ENCODE measurements at regions of chr1 and their contacts with region 1.

Region 1: GRCh38 chr1:23196639-23197328 is 20.5 kb downstream of the HTR1D start:
- DNase-seq: peak; percentile 96
- H3K4me3 ChIP-seq: no peak overlapping the region
- CTCF ChIP-seq: no peak

Region 2: DNA sequence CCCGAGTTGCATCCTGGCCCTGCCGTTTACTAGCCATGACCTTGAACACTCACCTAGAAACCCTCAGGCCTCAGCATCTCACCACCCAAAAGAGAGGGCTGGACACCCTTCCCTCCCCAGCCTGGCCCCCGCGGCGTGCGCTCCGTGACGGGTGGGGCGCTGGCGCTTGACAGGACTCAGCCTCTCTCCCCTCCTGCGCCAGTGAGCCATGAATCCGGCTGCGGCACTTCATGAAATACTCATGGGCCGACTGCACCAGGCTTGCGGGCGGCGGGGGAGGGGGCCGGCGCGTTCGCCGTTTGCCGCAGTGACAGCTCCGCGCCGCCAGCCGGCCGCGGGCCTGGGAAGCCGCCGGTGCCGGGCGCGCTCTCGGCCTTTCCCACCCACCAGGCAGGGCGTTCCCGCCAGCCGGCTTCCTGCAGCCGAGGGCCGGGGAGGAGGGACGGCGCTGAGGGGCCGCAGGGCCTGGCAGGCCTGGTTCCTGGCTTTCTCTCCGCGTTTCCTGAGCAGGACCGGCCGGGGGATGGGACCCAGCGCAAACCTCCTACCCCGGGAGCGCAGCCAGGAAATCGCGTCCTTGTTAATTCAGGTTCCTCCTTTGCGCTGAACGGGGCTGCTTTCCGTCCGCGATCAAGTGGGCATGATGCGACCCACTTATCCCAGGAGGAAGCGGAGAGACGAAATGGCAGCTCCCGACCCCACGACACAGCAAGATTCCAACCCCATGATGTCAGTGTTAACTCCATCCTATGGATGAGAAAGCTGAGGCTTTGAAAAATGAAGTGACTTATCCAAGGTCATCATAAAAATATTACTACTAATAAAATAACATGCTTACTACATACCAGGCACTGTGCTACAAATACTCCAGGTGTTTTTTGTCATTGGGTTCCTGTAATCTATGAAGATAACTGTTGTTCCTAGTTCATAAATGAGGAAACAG is 19.1 kb before region 1 on chr1:
- CTCF ChIA-PET with region 1: interaction called, 150 read pairs
- POLR2A ChIA-PET with region 1: no interaction called
- DNase-seq: no peak
- H3K4me3 ChIP-seq: peak overlapping the region; percentile 59
- CTCF ChIP-seq: peak; percentile 12